Breast epithelium (tissue), 4 donors: ENCODE measurements at regions of chr10 and their contacts with region 1.

Region 1: GRCh38 chr10:44857363-44858016 is 53.6 kb upstream of the TMEM72 start:
- DNase-seq: peak in 1 of 2 donors; percentile 61
- H3K4me3 ChIP-seq: no peak overlapping the region
- H3K27ac ChIP-seq: no peak overlapping the region
- H3K4me1 ChIP-seq: no peaks in the 10 kb centered on the region
- H3K27me3 ChIP-seq: no peaks in the 10 kb centered on the region
- CTCF ChIP-seq: peak; percentile 86 to 91 (median 88)
- POLR2A ChIP-seq: no peak

Region 2: GRCh38 chr10:43671656-43672531 is 1185.6 kb before region 1 on chr10:
- intact Hi-C with region 1: loop called (anchors 10 kb)
- DNase-seq: peak in 1 of 2 donors; percentile 51
- H3K4me3 ChIP-seq: no peak overlapping the region
- H3K27ac ChIP-seq: no peak overlapping the region
- H3K4me1 ChIP-seq: no peaks in the 10 kb centered on the region
- H3K27me3 ChIP-seq: peaks cover 0 to 19% of the 10 kb centered on the region in 2 donors
- CTCF ChIP-seq: peak; percentile 87 to 91 (median 90)
- POLR2A ChIP-seq: no peak

Region 3: DNA sequence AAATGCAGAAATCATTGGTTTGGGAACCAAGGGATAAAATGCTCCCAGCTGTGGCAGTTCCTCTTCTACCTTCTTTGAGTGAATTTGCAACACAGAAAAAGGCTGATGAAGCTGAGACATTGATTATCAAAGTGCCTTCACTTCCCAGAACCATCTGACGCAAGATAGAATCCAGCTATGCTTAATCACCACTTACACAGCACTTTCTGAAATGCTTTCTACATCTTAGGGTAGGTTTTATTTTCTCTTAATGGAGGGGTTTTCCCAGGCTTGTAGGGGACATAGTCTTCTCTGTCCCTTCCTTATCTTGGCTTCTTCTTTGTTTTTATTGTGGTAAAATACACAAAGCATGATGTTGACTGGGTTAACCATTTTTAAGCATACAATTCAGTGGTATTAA is 876.3 kb before region 1 on chr10:
- intact Hi-C with region 1: no loop called
- DNase-seq: no peak
- H3K4me3 ChIP-seq: no peak overlapping the region
- H3K27ac ChIP-seq: no peak overlapping the region
- H3K4me1 ChIP-seq: no peaks in the 10 kb centered on the region
- H3K27me3 ChIP-seq: no peaks in the 10 kb centered on the region
- CTCF ChIP-seq: no peak
- POLR2A ChIP-seq: no peak